ENCODE measurements at regions of chr9 and their contacts with region 1.

Region 1: GRCh38 chr9:6757456-6758247 is at the start of gene KDM4C:
- DNase-seq: peak; percentile 91
- H3K4me3 Mint-ChIP-seq: peak within 1 kb of the TSS; percentile 99
- H3K27ac Mint-ChIP-seq: peak within 1 kb of the TSS; percentile 99
- H3K4me1 Mint-ChIP-seq: peaks cover 12% of the 10 kb centered on the region
- H3K27me3 Mint-ChIP-seq: no peaks in the 10 kb centered on the region
- total RNA-seq, gene KDM4C: 35.9 and 41.4 TPM in 2 replicates

Region 2: GRCh38 chr9:5851445-5851844 is 906.2 kb before region 1 on chr9:
- intact Hi-C with region 1: loop called (anchors 5 kb)
- DNase-seq: peak; percentile 49
- H3K4me3 Mint-ChIP-seq: peak overlapping the region; percentile 28
- H3K27ac Mint-ChIP-seq: peak overlapping the region; percentile 68
- H3K4me1 Mint-ChIP-seq: peaks cover 69% of the 10 kb centered on the region
- H3K27me3 Mint-ChIP-seq: no peaks in the 10 kb centered on the region

Region 3: GRCh38 chr9:6566409-6567139 is 191.1 kb before region 1 on chr9:
- intact Hi-C with region 1: loop called (anchors 5 kb)
- DNase-seq: peak; percentile 44
- H3K4me3 Mint-ChIP-seq: peak overlapping the region; percentile 57
- H3K27ac Mint-ChIP-seq: peak overlapping the region; percentile 80
- H3K4me1 Mint-ChIP-seq: peaks cover 26% of the 10 kb centered on the region
- H3K27me3 Mint-ChIP-seq: peaks cover 4% of the 10 kb centered on the region

Region 4: GRCh38 chr9:6645355-6646292 is 112.0 kb before region 1 on chr9 and contains the start of gene GLDC:
- intact Hi-C with region 1: no loop called
- DNase-seq: peak; percentile 20
- H3K4me3 Mint-ChIP-seq: peak within 1 kb of the TSS; percentile 77
- H3K27ac Mint-ChIP-seq: peak within 1 kb of the TSS; percentile 59
- H3K4me1 Mint-ChIP-seq: peaks cover 19% of the 10 kb centered on the region
- H3K27me3 Mint-ChIP-seq: peaks cover 63% of the 10 kb centered on the region
- total RNA-seq, gene GLDC: 1.4 and 1.8 TPM in 2 replicates

Region 5: GRCh38 chr9:6703898-6704639 is 53.6 kb before region 1 on chr9:
- intact Hi-C with region 1: loop called (anchors 1 kb)
- DNase-seq: peak; percentile 84
- H3K4me3 Mint-ChIP-seq: peak overlapping the region; percentile 89
- H3K27ac Mint-ChIP-seq: peak overlapping the region; percentile 91
- H3K4me1 Mint-ChIP-seq: peaks cover 14% of the 10 kb centered on the region
- H3K27me3 Mint-ChIP-seq: peaks cover 4% of the 10 kb centered on the region

Region 6: DNA sequence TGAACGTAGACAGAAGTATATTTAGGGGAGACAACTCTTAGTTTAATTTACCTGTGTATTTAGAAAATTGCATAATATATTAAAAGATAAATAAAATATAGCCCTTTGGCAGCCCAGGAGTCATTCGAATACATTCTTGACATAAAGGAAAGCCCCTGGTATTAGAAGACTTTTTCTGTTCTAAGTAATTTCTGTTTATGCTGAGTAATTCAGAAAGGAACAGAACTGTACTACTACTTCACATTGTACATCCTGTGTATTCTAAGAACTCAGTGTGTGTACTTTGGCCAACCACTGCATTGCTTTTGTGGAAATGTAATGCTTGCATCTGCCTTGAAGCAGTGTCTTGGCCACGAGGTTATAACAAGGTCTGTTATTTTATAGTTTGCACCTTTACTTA is 136.5 kb after region 1 on chr9:
- intact Hi-C with region 1: loop called (anchors 5 kb)
- DNase-seq: no peak
- H3K4me3 Mint-ChIP-seq: peak overlapping the region; percentile 32
- H3K27ac Mint-ChIP-seq: peak overlapping the region; percentile 61
- H3K4me1 Mint-ChIP-seq: peaks cover 33% of the 10 kb centered on the region
- H3K27me3 Mint-ChIP-seq: no peaks in the 10 kb centered on the region